Activated CD8-positive, alpha-beta T cell treated with anti-CD3 and anti-CD28 coated beads for 36 hours (primary cell): ENCODE measurements at regions of chr3 and their contacts with region 1.

Region 1: GRCh38 chr3:101518421-101518871 is 5.4 kb upstream of the SENP7 start:
- DNase-seq: peak; percentile 67
- ATAC-seq: peak; percentile 95
- H3K4me3 Mint-ChIP-seq: peak overlapping the region; percentile 73
- H3K27ac Mint-ChIP-seq: peak overlapping the region; percentile 96
- H3K4me1 Mint-ChIP-seq: peaks cover 47% of the 10 kb centered on the region
- H3K27me3 Mint-ChIP-seq: no peaks in the 10 kb centered on the region
- CTCF ChIP-seq: no peak

Region 2: DNA sequence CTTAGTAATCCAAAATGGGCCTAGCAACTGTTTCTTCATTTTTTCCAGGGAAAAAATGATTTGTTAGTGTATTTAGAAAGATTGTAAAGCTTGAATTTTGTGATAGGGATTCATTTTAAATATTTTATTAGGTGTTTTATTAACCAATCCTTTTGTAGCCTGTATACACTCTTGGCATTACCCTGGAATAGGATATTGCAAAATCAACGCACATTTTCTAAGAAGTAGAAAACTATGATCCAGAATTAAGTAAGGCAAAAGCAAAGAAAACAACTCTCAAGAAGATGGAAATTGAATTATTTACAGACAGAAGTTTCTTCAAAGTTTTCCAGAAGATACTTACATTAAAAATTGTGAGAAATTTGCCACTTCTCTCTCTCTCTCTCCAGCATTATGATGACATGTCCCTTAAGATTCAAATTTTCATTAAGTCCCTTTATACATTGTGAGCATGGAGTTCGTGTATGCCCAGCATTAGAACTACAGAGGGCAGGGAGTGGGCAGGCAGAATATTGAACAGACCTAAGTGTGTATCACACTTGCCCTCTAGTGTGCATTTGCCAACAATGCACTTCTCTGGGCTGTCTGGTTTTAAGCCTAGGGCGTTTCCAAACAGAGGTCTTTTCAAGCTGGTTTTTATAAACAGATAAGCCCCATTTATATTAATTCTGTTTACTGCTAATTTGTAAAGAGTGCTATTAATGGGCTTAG is 1729.3 kb before region 1 on chr3:
- CTCF ChIA-PET with region 1: no interaction called
- POLR2A ChIA-PET with region 1: no interaction called
- intact Hi-C with region 1: no loop called
- DNase-seq: peak; percentile 32
- ATAC-seq: peak; percentile 78
- H3K4me3 Mint-ChIP-seq: no peak overlapping the region
- H3K27ac Mint-ChIP-seq: no peak overlapping the region
- H3K4me1 Mint-ChIP-seq: no peaks in the 10 kb centered on the region
- H3K27me3 Mint-ChIP-seq: peaks cover 2% of the 10 kb centered on the region
- CTCF ChIP-seq: peak; percentile 64

Region 3: DNA sequence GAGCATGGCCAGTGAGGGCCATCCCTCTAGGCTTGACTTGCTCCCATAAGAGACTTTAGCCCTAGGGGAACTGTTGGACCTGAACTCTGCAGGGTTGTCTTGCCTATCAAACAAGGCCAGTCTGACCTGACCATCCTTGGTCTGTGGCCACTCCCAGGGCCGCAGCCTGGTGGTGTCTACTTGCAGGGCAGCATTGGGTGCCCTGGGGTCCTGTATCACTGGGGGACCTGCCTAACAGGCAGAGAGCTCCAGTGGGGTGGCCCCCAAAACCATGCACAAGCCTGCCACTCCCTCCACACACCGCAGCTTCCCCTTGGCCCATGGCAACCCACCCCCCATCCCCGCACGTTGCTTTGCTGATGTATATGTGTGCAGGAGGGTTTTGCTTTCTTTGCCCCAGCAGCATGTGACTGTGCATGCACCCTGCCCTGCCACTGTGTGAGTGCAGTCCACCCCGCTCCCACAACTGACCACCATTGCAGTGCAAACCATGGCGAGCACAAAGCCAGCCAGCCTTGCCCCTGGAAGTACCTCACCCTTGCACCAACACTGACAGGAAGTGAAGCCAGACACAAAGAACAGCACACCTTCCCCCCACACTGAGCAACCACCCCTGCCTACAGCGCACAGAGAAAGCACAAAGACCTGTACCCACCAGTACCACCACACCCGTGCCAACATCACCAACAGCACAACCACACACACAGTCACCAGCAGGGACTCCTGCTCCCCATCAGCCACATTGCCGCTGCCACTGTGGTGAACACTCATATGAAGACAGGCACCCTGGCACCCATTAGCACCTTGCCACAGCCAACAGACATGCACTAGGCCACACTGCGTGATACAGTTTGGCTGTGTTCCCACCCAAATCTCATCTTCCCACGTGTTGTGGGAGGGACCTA is 94.2 kb before region 1 on chr3:
- CTCF ChIA-PET with region 1: no interaction called
- POLR2A ChIA-PET with region 1: no interaction called
- intact Hi-C with region 1: no loop called
- DNase-seq: peak; percentile 35
- ATAC-seq: peak; percentile 79
- H3K4me3 Mint-ChIP-seq: peak overlapping the region; percentile 13
- H3K27ac Mint-ChIP-seq: peak overlapping the region; percentile 84
- H3K4me1 Mint-ChIP-seq: peaks cover 38% of the 10 kb centered on the region
- H3K27me3 Mint-ChIP-seq: no peaks in the 10 kb centered on the region
- CTCF ChIP-seq: no peak

Region 4: GRCh38 chr3:101531473-101532086 is 13.1 kb after region 1 on chr3:
- CTCF ChIA-PET with region 1: interaction called, 12 read pairs
- POLR2A ChIA-PET with region 1: interaction called, 14 read pairs
- intact Hi-C with region 1: no loop called
- DNase-seq: no peak
- ATAC-seq: peak; percentile 73
- H3K4me3 Mint-ChIP-seq: no peak overlapping the region
- H3K27ac Mint-ChIP-seq: peak overlapping the region; percentile 77
- H3K4me1 Mint-ChIP-seq: peaks cover 32% of the 10 kb centered on the region
- H3K27me3 Mint-ChIP-seq: no peaks in the 10 kb centered on the region
- CTCF ChIP-seq: no peak

Region 5: GRCh38 chr3:101561630-101562328 is 43.3 kb after region 1 on chr3 and contains the start of gene TRMT10C:
- CTCF ChIA-PET with region 1: interaction called, 5 read pairs
- POLR2A ChIA-PET with region 1: interaction called, 8 read pairs
- intact Hi-C with region 1: loop called (anchors 5 kb)
- DNase-seq: peak; percentile 95
- ATAC-seq: peak; percentile 98
- H3K4me3 Mint-ChIP-seq: peak within 1 kb of the TSS; percentile 98
- H3K27ac Mint-ChIP-seq: peak within 1 kb of the TSS; percentile 98
- H3K4me1 Mint-ChIP-seq: peaks cover 42% of the 10 kb centered on the region
- H3K27me3 Mint-ChIP-seq: no peaks in the 10 kb centered on the region
- CTCF ChIP-seq: no peak
- total RNA-seq, gene TRMT10C: 45.8 to 49.4 TPM